HEK293T (cell line): ENCODE measurements at regions of chr11 and their contacts with region 1.

Region 1: GRCh38 chr11:10933455-10934292 is 75.8 kb upstream of the ZBED5 start:
- DNase-seq: peak; percentile 84

Region 2: DNA sequence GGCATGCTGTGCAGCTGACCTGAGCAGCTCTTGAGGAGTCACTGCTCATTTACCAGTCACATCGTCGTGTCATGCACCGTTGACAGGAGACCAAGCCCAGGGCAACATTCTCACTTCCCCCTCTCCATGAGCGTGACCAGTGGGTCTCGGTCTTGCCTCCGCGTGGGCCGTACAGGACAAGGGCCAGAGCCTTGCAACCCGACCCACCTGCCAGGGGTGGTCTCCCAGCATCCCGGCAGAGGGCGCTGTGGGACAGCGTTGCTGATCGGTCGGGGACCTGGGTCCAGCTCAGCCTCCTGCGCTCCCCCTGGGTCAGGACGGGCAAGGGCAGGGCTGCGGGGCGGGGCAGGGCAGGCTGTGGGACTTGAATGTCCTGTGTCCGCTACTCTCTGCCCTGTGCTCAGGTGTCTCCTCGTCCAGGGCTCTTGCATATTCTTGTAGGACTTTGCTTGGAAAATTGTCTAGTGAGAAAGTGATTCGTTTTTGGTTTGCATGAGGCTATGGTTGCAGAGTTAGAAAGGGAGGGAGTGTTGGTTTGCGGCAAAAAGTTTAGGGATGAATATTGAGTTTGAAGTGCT is 141.2 kb before region 1 on chr11:
- CTCF ChIA-PET with region 1: interaction called, 12 read pairs
- POLR2A ChIA-PET with region 1: interaction called, 4 read pairs
- DNase-seq: peak; percentile 90

Region 3: DNA sequence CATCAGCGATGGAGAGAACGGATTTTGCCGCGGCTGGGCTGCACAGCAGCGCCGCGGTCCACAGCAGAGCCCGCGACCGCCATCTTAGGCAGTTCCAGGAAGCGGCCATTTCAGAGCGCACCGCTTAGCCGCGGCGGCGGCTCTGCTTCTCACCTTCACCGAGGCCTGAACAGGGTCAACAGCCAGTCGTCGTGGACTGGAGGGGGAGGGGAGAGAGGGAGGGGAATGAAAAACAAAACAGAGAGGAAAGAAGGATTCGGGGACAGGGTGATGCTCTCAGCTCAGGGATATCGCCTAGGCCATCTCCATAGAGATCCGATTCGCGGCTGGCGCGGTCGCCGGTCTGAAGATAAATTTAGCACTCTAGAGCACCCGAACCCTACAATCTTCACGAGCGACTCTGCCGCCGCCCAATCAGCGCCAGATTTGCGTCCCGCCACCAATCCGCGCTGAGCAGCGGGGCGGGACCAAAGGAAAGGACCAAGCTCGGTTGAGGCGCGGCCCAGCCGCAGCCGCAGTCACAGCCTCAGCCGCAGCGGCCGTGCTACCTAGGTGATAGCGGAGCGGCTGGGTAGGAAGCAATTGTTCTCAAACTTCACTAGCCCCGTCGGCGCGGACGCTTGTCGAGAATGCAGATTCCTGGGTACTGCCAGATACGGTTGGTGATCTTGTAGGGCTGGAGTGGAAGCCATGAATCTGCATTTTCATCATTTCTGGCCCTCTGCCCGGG is 75.8 kb before region 1 on chr11 and contains the start of gene ZBED5:
- CTCF ChIA-PET with region 1: no interaction called
- POLR2A ChIA-PET with region 1: interaction called, 14 read pairs
- DNase-seq: peak; percentile 92

Region 4: DNA sequence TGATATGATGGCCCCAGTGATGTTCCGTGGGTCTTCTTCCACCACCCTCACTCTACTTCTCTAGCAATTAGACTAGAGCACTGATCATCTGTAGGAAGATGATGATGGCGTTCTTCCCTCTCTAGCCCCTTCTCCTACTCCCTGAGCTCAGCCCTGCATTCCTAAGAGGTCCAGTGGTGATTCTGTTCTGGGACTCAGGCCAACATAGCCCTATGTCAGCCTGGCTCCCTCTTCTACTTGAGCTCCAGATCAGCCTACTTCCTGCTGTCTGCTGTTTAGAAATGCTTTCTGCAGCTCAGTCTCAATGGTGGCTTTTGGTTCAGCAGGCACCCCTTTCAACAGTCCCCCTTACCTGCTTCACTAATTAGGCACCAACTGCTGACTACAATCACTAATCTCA is 10.3 kb after region 1 on chr11:
- CTCF ChIA-PET with region 1: interaction called, 18 read pairs
- POLR2A ChIA-PET with region 1: interaction called, 6 read pairs
- DNase-seq: no peak

Region 5: DNA sequence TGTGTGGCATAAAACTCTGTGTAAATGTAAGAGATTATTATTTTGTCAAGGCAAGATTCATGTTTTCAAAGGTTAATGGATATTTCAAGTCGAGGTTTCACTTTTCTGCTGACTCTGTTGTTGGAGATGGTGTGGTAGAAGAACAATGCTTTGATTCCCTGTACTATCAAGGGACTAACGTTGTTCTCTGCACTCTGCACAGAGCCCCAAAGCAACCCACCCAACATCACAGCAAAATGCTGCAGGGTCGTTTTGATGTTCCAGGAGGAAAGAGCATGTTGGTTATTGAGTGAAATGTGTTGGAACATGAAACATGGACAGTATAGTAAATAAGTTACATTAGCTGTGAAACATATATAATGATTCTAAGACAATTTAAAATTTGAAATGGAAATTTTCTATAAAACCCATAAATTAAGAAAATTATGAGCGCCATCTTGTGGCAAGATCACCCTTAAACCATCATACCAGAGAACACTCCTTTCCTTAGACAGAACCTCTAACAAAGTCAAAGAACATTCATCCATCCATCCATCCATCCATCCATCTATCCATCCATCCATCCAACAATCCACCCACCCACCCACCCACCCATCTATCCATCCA is 88.6 kb after region 1 on chr11:
- CTCF ChIA-PET with region 1: interaction called, 50 read pairs
- POLR2A ChIA-PET with region 1: interaction called, 11 read pairs
- DNase-seq: no peak

Region 6: DNA sequence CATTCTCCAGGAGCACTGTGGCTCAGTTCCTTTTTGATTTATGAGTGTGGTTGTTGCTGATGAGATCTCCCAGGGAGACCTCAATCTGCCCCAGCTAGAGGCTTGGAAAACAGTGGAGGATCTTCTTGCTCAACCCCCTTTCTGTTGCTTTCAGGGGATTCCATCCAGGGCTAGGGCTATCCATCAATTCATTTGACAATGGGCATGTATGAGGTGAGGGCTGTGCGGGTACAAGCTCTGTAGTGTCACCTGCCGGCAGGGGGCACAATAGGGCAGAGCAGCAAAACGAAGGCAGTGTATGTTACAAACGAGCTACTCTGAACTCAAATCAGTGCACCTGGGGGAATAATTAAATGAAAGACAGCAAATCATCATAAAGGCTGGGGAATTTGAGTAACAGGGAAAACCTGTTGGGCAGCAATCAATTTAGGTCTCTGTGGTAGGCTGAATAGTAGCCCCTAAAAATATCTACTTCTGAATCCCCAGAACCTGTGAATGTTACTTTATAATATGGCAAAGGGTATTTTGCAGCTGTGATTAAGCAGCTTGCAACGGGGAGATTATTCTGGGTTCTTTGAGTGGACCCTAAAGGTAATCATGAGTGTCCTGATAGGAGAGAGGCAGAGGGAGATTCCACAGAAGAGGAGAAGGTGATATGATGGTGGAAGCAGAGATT is 94.5 kb after region 1 on chr11:
- CTCF ChIA-PET with region 1: interaction called, 50 read pairs
- POLR2A ChIA-PET with region 1: interaction called, 4 read pairs
- DNase-seq: peak; percentile 71